ENCODE measurements at regions of chr7 and their contacts with region 1.

Region 1: DNA sequence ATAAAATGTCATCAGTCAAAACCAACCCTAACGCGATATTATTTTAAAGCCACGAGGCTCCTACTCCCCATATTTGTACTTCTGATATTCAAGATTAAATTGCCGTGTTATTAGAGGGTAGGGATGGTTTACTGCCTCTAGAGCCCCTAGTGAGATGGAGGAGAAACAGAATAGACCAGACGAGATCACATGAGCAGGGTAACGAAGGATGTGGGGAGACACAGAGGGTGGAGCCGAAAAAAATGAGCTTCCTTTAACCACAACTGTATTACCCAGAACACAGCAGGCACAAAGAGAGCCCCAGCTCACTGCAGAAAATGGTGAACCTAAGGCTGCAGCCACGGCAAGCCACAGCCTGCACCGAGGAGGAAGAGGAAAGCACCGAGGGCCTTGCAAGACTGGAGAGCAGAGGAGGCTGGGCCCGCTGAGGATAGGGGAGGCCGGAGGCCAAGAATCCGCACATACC is 14.3 kb downstream of the ZC3HAV1 start:
- DNase-seq: peak; percentile 65 to 96 (median 76)
- ATAC-seq: peak; percentile 87
- H3K4me3 ChIP-seq: peak overlapping the region; percentile 52
- H3K4me3 Mint-ChIP-seq: peak overlapping the region; percentile 89
- H3K27ac ChIP-seq: peak overlapping the region; percentile 74 to 80
- H3K27ac Mint-ChIP-seq: peak overlapping the region; percentile 92
- H3K4me1 ChIP-seq: peaks cover 87% of the 10 kb centered on the region
- H3K4me1 Mint-ChIP-seq: peaks cover 89% of the 10 kb centered on the region
- H3K27me3 ChIP-seq: no peaks in the 10 kb centered on the region
- H3K27me3 Mint-ChIP-seq: no peaks in the 10 kb centered on the region
- CTCF ChIP-seq: no peak

Region 2: GRCh38 chr7:138886501-138886917 is 208.7 kb before region 1 on chr7:
- CTCF ChIA-PET with region 1: interaction called, 4 read pairs
- POLR2A ChIA-PET with region 1: interaction called, 13 read pairs
- intact Hi-C with region 1: no loop called
- DNase-seq: peak in 8 of 14 experiments; percentile 13 to 85 (median 52)
- ATAC-seq: peak; percentile 95
- H3K4me3 ChIP-seq: no peak overlapping the region
- H3K4me3 Mint-ChIP-seq: no peak overlapping the region
- H3K27ac ChIP-seq: no peak overlapping the region
- H3K27ac Mint-ChIP-seq: peak overlapping the region; percentile 2
- H3K4me1 ChIP-seq: peaks cover 16% of the 10 kb centered on the region
- H3K4me1 Mint-ChIP-seq: peaks cover 20% of the 10 kb centered on the region
- H3K27me3 ChIP-seq: no peaks in the 10 kb centered on the region
- H3K27me3 Mint-ChIP-seq: no peaks in the 10 kb centered on the region
- CTCF ChIP-seq: peak; percentile 75

Region 3: GRCh38 chr7:139054101-139054500 is 41.1 kb before region 1 on chr7:
- CTCF ChIA-PET with region 1: no interaction called
- POLR2A ChIA-PET with region 1: interaction called, 11 read pairs
- intact Hi-C with region 1: no loop called
- DNase-seq: no peak
- ATAC-seq: no peak
- H3K4me3 ChIP-seq: no peak overlapping the region
- H3K4me3 Mint-ChIP-seq: no peak overlapping the region
- H3K27ac ChIP-seq: no peak overlapping the region
- H3K27ac Mint-ChIP-seq: peak overlapping the region; percentile 75
- H3K4me1 ChIP-seq: peaks cover 8% of the 10 kb centered on the region
- H3K4me1 Mint-ChIP-seq: peaks cover 36% of the 10 kb centered on the region
- H3K27me3 ChIP-seq: no peaks in the 10 kb centered on the region
- H3K27me3 Mint-ChIP-seq: no peaks in the 10 kb centered on the region
- CTCF ChIP-seq: no peak

Region 4: DNA sequence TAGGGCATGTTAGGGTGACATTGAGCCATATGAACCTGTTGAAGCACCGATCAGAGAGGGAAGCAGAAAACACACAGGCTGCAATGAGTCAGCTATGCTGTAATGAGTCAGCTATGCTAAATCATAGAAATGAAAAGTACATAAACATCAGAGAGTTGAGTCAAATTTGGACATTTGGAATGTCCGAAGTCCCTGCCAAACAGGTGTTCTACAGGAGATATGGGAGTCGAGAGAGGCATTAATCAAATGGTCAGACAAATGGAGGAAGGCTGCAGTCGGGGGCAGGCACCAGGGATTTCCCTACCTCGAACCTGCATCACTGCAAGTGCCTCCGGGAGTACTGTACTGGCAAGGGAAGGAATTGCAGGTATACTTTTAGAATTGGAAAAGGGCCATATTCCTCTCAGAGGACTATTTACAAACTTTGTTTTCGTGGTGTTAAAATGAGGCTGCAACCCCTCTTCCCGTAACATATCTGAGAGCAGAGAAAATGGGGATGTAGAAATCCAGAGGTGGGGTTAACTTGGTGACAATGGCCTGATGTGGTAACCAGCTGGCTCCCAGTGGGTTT is 23.1 kb after region 1 on chr7:
- CTCF ChIA-PET with region 1: interaction called, 4 read pairs
- POLR2A ChIA-PET with region 1: interaction called, 10 read pairs
- intact Hi-C with region 1: no loop called
- DNase-seq: peak in 2 of 14 experiments; percentile 39 to 55
- ATAC-seq: no peak
- H3K4me3 ChIP-seq: no peak overlapping the region
- H3K4me3 Mint-ChIP-seq: peak overlapping the region; percentile 28
- H3K27ac ChIP-seq: peak overlapping the region in 1 of 2 donors; percentile 17
- H3K27ac Mint-ChIP-seq: peak overlapping the region; percentile 70
- H3K4me1 ChIP-seq: peaks cover 24% of the 10 kb centered on the region
- H3K4me1 Mint-ChIP-seq: peaks cover 50% of the 10 kb centered on the region
- H3K27me3 ChIP-seq: no peaks in the 10 kb centered on the region
- H3K27me3 Mint-ChIP-seq: no peaks in the 10 kb centered on the region
- CTCF ChIP-seq: no peak

Region 5: DNA sequence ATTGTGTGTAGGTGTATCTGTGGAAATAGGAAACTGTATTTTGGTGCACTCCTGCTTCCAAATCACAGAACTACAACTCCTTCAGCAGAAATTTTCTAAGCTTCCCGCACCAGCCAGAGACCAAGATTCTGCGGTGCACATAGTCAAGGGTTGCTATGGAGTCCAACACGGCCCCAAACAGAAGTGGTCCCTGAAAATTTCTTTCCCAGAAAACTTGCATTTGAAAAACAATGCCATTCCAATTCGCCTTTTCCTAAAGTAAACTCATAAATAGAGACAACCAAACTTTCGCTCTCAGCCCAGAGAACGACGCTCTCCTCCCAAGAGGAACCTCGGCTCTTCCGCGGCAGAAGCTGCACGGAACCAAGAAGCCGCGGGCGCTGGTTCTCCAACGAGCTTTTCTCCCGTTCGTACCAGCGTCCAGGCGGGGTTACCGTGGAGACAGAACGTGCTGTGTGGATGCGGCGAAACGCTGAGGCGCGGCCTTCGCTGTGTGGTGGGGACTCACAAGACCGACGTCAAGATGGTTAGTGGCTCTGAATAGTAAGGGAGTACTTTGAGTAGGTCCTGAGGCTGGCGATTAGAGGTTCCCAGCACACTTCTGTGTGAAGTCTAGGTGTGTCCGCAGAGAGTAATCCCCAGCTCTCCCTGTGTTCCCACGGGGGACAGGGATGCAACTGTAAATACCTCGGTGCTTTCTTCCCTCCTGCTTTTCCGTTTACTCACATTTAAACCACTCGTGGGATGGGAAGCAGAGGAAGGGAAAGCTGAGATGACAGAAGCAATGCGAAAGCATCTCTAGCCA is 38.3 kb after region 1 on chr7:
- CTCF ChIA-PET with region 1: interaction called, 5 read pairs
- POLR2A ChIA-PET with region 1: interaction called, 23 read pairs
- intact Hi-C with region 1: loop called in 1 of 2 experiments (anchors 5 kb)
- DNase-seq: peak; percentile 81 to 94 (median 86)
- ATAC-seq: peak; percentile 98
- H3K4me3 ChIP-seq: peak overlapping the region; percentile 68
- H3K4me3 Mint-ChIP-seq: peak overlapping the region; percentile 89
- H3K27ac ChIP-seq: peak overlapping the region; percentile 35 to 65
- H3K27ac Mint-ChIP-seq: peak overlapping the region; percentile 83
- H3K4me1 ChIP-seq: peaks cover 18% of the 10 kb centered on the region
- H3K4me1 Mint-ChIP-seq: peaks cover 14% of the 10 kb centered on the region
- H3K27me3 ChIP-seq: no peaks in the 10 kb centered on the region
- H3K27me3 Mint-ChIP-seq: no peaks in the 10 kb centered on the region
- CTCF ChIP-seq: no peak

Region 6: DNA sequence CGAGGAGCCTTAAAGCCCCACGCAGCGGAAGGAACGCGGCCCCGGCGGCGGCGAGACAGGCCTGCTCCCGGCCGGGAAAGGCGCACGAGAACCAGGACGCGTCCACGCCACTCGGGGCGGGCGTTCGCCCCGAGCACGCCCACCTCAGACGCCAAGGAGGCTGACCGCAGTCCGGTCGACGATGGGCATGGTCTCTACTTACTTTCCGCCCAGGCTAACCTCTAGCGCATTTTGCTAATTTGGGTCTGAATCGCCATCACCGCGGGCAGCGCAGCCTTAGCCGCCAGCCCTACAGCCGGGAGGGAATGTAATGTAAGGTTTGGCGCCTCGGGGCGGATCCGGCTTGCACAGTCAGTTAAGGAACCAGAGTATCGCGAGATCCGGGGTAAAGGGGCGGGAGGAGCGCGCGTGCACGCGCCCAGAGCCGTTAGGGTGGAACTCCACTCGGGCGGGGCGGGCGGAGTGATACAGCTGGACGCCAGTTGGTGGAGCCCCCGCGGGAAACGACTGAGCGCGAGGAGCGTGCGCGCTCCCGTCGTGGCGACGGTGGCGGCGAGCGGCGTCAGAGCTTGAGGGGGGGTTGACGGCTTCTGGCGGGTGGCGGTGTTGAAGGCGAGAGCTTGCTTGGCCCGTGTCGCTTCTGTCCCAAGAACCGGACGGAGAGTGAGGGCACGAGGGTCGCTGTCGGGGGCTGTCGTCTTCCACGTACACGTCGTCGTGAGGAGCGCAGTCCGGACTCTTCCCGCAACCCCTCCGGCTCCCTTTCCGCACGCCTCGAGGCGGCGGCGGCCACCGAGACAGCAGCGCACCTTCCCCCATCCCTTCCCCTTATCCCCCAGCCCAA is 264.4 kb after region 1 on chr7 and contains the start of gene LUC7L2:
- CTCF ChIA-PET with region 1: no interaction called
- POLR2A ChIA-PET with region 1: interaction called, 11 read pairs
- intact Hi-C with region 1: no loop called
- DNase-seq: peak; percentile 99 to 100 (median 99)
- ATAC-seq: peak; percentile 72
- H3K4me3 ChIP-seq: peak within 1 kb of the TSS; percentile 91
- H3K4me3 Mint-ChIP-seq: peak within 1 kb of the TSS; percentile 99
- H3K27ac ChIP-seq: peak within 1 kb of the TSS; percentile 98 to 99
- H3K27ac Mint-ChIP-seq: peak within 1 kb of the TSS; percentile 98
- H3K4me1 ChIP-seq: peaks cover 25% of the 10 kb centered on the region
- H3K4me1 Mint-ChIP-seq: peaks cover 52% of the 10 kb centered on the region
- H3K27me3 ChIP-seq: no peaks in the 10 kb centered on the region
- H3K27me3 Mint-ChIP-seq: no peaks in the 10 kb centered on the region
- CTCF ChIP-seq: no peak
- total RNA-seq, gene LUC7L2: 177 to 194 TPM

Region 7: DNA sequence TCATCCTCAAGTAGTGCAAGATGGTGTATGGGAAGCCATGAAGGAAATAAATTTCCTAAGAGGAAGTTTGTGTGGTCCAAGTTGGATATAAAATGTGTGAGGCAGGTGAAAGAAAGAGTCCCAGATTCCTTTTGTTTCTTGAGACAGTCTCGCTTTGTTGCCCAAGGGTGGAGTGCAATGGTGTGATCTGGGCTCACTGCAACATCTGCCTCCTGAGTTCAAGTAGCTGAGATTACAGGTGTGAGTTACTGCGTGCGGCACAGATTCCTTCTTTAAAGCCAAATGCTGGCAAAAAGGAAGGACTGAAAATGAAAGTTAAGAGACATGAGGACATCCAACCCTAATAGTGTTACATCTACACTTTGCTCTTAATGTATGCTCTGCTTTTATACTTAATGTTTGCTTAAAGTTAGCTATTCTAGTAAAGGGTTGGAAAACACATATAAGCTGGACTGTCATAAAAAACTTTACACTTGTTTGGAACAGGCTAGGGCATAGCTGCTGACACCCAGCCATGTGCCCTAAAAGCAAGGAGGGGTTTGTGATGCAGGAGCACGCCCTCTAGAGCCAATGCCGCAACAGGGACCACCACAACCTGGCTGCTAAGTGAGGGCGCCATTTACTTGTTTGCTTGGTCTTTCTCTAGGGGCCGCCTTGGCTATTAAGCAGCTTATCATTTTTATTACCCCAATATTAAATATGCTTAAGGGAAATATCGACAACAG is 462.8 kb after region 1 on chr7:
- CTCF ChIA-PET with region 1: no interaction called
- POLR2A ChIA-PET with region 1: no interaction called
- intact Hi-C with region 1: no loop called
- DNase-seq: no peak
- ATAC-seq: no peak
- H3K4me3 ChIP-seq: no peak overlapping the region
- H3K4me3 Mint-ChIP-seq: no peak overlapping the region
- H3K27ac ChIP-seq: no peak overlapping the region
- H3K27ac Mint-ChIP-seq: no peak overlapping the region
- H3K4me1 ChIP-seq: no peaks in the 10 kb centered on the region
- H3K4me1 Mint-ChIP-seq: peaks cover 5% of the 10 kb centered on the region
- H3K27me3 ChIP-seq: no peaks in the 10 kb centered on the region
- H3K27me3 Mint-ChIP-seq: no peaks in the 10 kb centered on the region
- CTCF ChIP-seq: no peak